WTC11 (cell line): ENCODE measurements at regions of chr11 and their contacts with region 1.

Region 1: DNA sequence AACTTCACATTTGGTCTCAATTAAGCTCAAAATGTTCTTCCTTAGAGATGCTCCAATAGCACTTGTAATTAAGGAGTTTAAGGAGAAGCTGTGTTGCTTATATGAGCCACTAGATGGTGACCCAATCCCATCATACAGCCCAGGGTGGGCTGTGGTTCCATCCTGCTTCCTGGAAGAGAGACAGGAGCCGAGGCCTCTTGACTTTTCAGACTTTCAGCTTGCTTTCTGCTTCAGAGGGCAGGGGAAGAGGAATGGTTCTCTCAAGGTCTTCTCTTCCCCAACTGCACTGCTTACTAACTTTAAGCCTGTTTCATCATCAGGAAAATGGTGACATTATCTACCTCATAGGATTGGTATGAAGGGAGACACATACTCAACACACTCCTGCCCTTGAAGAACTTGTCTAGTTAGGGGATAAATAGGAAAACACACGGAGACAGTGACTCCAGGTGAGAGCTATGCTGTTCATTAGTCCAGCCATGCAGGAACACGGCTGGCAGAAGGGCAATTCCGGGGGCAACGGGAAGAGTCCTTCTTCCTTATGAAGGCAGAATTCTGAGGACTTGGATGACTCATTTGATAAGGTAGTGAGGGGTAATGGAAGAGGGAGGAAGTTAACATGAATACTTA is 20.1 kb downstream of the TMEM218 start:
- DNase-seq: peak; percentile 58
- ATAC-seq: peak; percentile 95
- H3K4me3 Mint-ChIP-seq: no peak overlapping the region
- H3K27ac Mint-ChIP-seq: peak overlapping the region; percentile 64
- H3K4me1 Mint-ChIP-seq: peaks cover 25% of the 10 kb centered on the region
- H3K27me3 Mint-ChIP-seq: no peaks in the 10 kb centered on the region
- CTCF ChIP-seq: peak; percentile 25; the same call in 1 of the 2 replicates

Region 2: GRCh38 chr11:125062931-125063428 is 28.4 kb before region 1 on chr11 and contains the start of gene SLC37A2:
- CTCF ChIA-PET with region 1: interaction called, 14 read pairs
- POLR2A ChIA-PET with region 1: no interaction called
- DNase-seq: peak; percentile 73
- ATAC-seq: peak; percentile 90
- H3K4me3 Mint-ChIP-seq: peak within 1 kb of the TSS; percentile 77
- H3K27ac Mint-ChIP-seq: no peak within 1 kb of the TSS
- H3K4me1 Mint-ChIP-seq: peaks cover 8% of the 10 kb centered on the region; the same call in 1 of the 2 replicates
- H3K27me3 Mint-ChIP-seq: peaks cover 59% of the 10 kb centered on the region
- CTCF ChIP-seq: no peak
- total RNA-seq, gene SLC37A2: 1.3 to 2.2 TPM (median 2.1 TPM) in 3 replicates

Region 3: GRCh38 chr11:125111343-125112207 is 20.2 kb after region 1 on chr11 and contains the start of gene TMEM218:
- CTCF ChIA-PET with region 1: interaction called, 45 read pairs
- POLR2A ChIA-PET with region 1: interaction called, 3 read pairs
- DNase-seq: peak; percentile 98
- ATAC-seq: peak; percentile 99
- H3K4me3 Mint-ChIP-seq: peak within 1 kb of the TSS; percentile 98
- H3K27ac Mint-ChIP-seq: peak within 1 kb of the TSS; percentile 98
- H3K4me1 Mint-ChIP-seq: peaks cover 14% of the 10 kb centered on the region
- H3K27me3 Mint-ChIP-seq: no peaks in the 10 kb centered on the region; the same call in 1 of the 2 replicates
- CTCF ChIP-seq: no peak
- total RNA-seq, gene TMEM218: 10.3 to 12.4 TPM (median 11.0 TPM) in 3 replicates

Region 4: DNA sequence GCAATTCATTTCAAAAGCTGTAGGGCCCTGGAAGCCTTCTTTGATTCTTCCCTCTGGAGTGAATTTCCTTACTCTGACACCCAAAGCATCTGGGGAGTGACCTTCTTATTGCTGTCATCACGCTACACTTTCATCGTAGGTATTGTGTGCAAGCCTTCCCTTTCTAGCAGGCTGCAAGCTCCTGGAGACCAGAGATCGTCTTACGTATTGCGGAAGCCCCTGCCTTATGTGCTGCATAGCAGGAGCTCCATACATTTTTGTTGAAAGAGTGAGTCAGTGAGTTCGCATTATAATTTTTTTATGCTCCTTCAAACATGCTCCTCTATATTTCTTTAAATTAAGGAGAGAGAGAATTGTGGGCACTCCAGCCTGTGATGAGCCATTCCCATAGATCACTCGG is 41.2 kb after region 1 on chr11:
- CTCF ChIA-PET with region 1: interaction called, 10 read pairs
- POLR2A ChIA-PET with region 1: interaction called, 3 read pairs
- DNase-seq: no peak
- ATAC-seq: no peak
- H3K4me3 Mint-ChIP-seq: no peak overlapping the region
- H3K27ac Mint-ChIP-seq: no peak overlapping the region
- H3K4me1 Mint-ChIP-seq: peaks cover 6% of the 10 kb centered on the region
- H3K27me3 Mint-ChIP-seq: peaks cover 42% of the 10 kb centered on the region
- CTCF ChIP-seq: no peak

Region 5: DNA sequence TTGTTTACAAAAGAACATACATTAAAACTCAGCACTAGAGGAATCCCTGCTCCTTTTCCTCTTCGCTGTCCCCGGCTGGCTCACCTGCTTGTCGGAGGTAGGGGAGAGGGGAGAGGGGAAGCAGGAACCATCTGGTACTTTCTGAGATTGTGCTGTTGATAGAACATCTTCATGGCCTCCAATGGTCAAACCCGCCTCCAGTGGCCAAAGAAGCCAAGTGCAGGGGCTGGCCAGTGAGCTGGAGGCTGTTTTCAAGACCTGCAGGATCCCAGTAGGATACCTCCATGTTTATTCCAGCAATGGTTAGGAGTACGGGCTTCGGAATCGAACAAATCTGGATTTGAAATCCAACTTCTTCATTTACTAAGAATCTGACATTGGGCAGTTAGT is 165.8 kb after region 1 on chr11:
- CTCF ChIA-PET with region 1: interaction called, 17 read pairs
- POLR2A ChIA-PET with region 1: no interaction called
- DNase-seq: peak; percentile 69
- ATAC-seq: peak; percentile 76
- H3K4me3 Mint-ChIP-seq: no peak overlapping the region
- H3K27ac Mint-ChIP-seq: no peak overlapping the region
- H3K4me1 Mint-ChIP-seq: peaks cover 43% of the 10 kb centered on the region
- H3K27me3 Mint-ChIP-seq: peaks cover 12% of the 10 kb centered on the region
- CTCF ChIP-seq: peak; percentile 32; the same call in 1 of the 2 replicates

Region 6: DNA sequence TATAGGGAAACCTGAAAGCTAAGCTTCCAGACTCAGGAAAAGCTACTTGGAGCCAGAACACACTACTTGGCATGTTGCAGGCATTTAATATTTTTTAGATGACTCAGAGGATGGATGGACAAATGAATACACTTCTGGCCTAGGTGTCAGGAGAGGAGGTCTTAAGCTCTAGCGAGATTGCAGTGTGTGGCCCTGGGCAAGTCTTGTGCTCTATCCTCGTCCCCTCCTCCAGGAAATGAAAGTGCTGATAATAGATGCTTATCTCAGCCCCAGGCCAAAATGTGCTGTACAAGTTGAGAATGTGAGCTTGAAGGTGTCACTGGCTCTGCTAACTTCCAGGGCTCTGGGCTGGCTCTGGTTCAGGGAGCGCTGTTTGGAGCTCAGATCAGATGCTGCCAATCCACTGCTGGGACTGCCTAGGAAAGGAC is 209.4 kb after region 1 on chr11:
- CTCF ChIA-PET with region 1: no interaction called
- POLR2A ChIA-PET with region 1: no interaction called
- DNase-seq: no peak
- ATAC-seq: no peak
- H3K4me3 Mint-ChIP-seq: no peak overlapping the region
- H3K27ac Mint-ChIP-seq: no peak overlapping the region
- H3K4me1 Mint-ChIP-seq: peaks cover 6% of the 10 kb centered on the region
- H3K27me3 Mint-ChIP-seq: no peaks in the 10 kb centered on the region
- CTCF ChIP-seq: no peak

Region 7: DNA sequence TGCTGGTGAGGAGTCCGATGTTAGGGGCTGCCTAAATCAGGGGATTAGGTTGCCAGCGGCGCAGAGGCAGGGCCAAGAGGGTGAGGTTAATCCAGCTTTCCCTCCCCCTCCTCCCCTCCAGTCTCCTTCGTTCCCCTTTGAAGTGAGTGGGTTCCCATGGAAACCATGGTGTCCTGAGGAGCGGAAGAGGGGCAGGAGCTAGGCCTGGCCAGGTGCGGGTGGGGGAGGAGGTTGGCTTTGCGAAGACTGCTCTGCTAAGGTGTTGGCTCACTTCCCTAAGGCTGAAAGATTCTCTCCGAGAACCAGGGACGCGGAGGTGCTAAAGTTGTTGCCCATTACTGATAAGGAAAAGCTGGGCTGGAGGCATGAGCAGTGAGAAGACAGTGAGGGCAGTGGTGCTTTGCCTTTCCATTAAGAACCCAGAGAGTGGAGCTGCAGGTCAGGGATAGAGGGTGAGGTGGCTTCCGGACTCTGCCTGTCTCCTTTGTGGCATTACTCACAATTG is 280.1 kb after region 1 on chr11:
- CTCF ChIA-PET with region 1: interaction called, 11 read pairs
- POLR2A ChIA-PET with region 1: no interaction called
- DNase-seq: peak; percentile 86
- ATAC-seq: peak; percentile 88
- H3K4me3 Mint-ChIP-seq: peak overlapping the region; percentile 64
- H3K27ac Mint-ChIP-seq: peak overlapping the region; percentile 97
- H3K4me1 Mint-ChIP-seq: peaks cover 58% of the 10 kb centered on the region
- H3K27me3 Mint-ChIP-seq: peaks cover 5% of the 10 kb centered on the region
- CTCF ChIP-seq: no peak

Region 8: GRCh38 chr11:125423247-125423849 is 332.0 kb after region 1 on chr11:
- CTCF ChIA-PET with region 1: interaction called, 128 read pairs
- POLR2A ChIA-PET with region 1: interaction called, 3 read pairs
- DNase-seq: no peak
- ATAC-seq: peak; percentile 79
- H3K4me3 Mint-ChIP-seq: no peak overlapping the region
- H3K27ac Mint-ChIP-seq: no peak overlapping the region
- H3K4me1 Mint-ChIP-seq: peaks cover 21% of the 10 kb centered on the region
- H3K27me3 Mint-ChIP-seq: no peaks in the 10 kb centered on the region
- CTCF ChIP-seq: 0 out of 2 replicates have a peak, but pooled peaks have one; percentile 17